ENCODE measurements at regions of chr14 and their contacts with region 1.

Region 1: GRCh38 chr14:54566410-54567223 is at the start of gene SAMD4A:
- DNase-seq: peak; percentile 68 to 88
- ATAC-seq: peak; percentile 60 to 71
- H3K4me3 ChIP-seq: peak within 1 kb of the TSS; percentile 75
- H3K27ac ChIP-seq: peak within 1 kb of the TSS; percentile 88 to 98
- H3K4me1 ChIP-seq: peaks cover 35% of the 10 kb centered on the region
- CTCF ChIP-seq: peak; percentile 33
- EP300 ChIP-seq: no peak
- POLR2A ChIP-seq: peak; percentile 21; the same call in 1 of the 2 replicates
- RAD21 ChIP-seq: peak; percentile 52 to 60
- polyA plus RNA-seq, gene SAMD4A: 3.9 and 5.3 TPM in 2 replicates

Region 2: GRCh38 chr14:54440873-54441868 is 125.4 kb before region 1 on chr14 and contains the start of gene CNIH1:
- CTCF ChIA-PET with region 1: no interaction called
- POLR2A ChIA-PET with region 1: no interaction called
- DNase-seq: peak; percentile 88 to 94
- ATAC-seq: peak; percentile 98 to 99
- H3K4me3 ChIP-seq: peak within 1 kb of the TSS; percentile 78
- H3K27ac ChIP-seq: peak within 1 kb of the TSS; percentile 94 to 98
- H3K4me1 ChIP-seq: peaks cover 36% of the 10 kb centered on the region
- CTCF ChIP-seq: peak; percentile 84
- EP300 ChIP-seq: no peak
- POLR2A ChIP-seq: peak; percentile 92
- RAD21 ChIP-seq: peak in 1 of 2 experiments; percentile 18; a peak in 1 of 5 replicates
- polyA plus RNA-seq, gene CNIH1: 411 and 487 TPM in 2 replicates

Region 3: GRCh38 chr14:54498095-54498531 is 68.5 kb before region 1 on chr14:
- CTCF ChIA-PET with region 1: no interaction called
- POLR2A ChIA-PET with region 1: no interaction called
- DNase-seq: no peak
- ATAC-seq: no peak
- H3K4me3 ChIP-seq: no peak overlapping the region
- H3K27ac ChIP-seq: no peak overlapping the region
- H3K4me1 ChIP-seq: peaks cover 4% of the 10 kb centered on the region; the same call in 1 of the 3 replicates
- CTCF ChIP-seq: no peak
- EP300 ChIP-seq: 0 out of 5 replicates have a peak, but pooled peaks of 1 of the 2 experiments have one; percentile 8
- POLR2A ChIP-seq: no peak
- RAD21 ChIP-seq: no peak

Region 4: DNA sequence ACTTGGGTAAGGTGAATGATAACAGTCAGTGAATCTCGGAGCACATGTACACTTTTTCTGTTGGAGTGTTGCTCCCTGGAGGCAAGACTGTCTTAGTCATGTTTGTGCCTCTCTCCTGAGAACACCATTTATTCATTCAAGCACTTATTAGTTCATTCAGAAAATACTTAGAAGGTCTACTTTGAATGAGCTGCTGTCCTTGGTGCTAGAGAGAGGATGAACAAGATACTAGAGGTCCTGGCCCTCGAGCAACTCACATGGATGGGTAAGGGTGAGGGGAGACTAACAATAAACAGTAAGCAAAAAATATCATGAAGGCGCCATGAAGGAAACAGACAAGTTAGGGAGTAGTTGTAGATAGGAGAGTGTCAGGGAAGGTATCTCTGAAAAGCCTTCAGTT is 16.8 kb before region 1 on chr14:
- CTCF ChIA-PET with region 1: interaction called, 25 read pairs
- POLR2A ChIA-PET with region 1: no interaction called
- DNase-seq: no peak
- ATAC-seq: 0 out of 6 replicates have a peak, but pooled peaks of 1 of the 2 experiments have one; percentile 34
- H3K4me3 ChIP-seq: no peak overlapping the region
- H3K27ac ChIP-seq: no peak overlapping the region
- H3K4me1 ChIP-seq: no peaks in the 10 kb centered on the region
- CTCF ChIP-seq: no peak
- EP300 ChIP-seq: no peak
- POLR2A ChIP-seq: no peak
- RAD21 ChIP-seq: no peak

Region 5: DNA sequence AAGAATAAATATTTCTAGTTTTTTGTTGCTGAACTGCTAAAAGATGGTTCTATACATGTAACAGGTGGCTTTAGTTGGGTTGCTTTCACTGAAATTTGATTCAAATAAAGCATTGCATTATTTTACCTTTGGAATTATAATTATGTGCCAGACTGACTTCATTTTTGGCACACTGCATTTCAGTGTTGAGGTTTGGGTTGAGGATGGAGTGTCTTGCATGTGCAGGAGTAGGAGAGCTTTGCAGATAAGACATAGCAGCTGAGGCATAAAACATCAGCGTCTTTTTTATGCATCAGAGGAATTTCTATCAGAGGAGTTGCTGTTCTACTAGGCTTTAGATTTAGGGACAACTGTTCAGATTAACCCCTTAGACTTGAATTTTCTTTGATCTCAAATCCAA is 17.5 kb after region 1 on chr14:
- CTCF ChIA-PET with region 1: interaction called, 11 read pairs
- POLR2A ChIA-PET with region 1: no interaction called
- DNase-seq: no peak
- ATAC-seq: no peak
- H3K4me3 ChIP-seq: no peak overlapping the region
- H3K27ac ChIP-seq: no peak overlapping the region
- H3K4me1 ChIP-seq: peaks cover 9% of the 10 kb centered on the region
- CTCF ChIP-seq: no peak
- EP300 ChIP-seq: no peak
- POLR2A ChIP-seq: no peak
- RAD21 ChIP-seq: no peak

Region 6: DNA sequence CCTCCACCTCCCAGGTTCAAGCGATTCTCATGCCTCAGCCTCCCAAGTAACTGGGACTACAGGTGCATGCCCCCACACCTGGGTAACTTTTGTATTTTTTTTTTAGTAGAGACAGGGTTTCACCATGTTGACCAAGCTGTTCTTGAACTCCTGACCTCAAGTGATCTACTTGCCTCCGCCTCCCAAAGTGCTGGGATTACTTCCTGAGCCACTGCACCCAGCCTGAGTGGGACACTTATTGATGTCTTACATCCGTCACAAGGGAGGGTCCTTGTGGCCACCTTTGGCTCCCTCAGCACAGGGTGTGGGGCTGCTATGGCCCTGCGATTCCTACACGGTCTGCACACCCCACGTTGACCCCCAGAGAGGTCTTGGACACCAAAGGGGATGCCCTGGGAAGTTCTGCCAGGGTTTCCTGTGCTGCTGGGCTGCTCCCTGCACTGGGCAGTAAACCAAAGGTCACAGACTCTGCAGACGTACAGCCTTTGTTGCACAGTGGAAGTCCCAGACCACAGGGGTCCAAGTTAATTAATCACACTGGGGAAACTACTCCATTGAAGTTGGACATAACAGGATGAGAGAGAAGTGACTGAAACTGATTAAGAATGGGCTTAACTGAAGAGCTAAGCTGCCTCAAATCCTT is 96.0 kb after region 1 on chr14:
- CTCF ChIA-PET with region 1: interaction called, 10 read pairs
- POLR2A ChIA-PET with region 1: no interaction called
- DNase-seq: no peak
- ATAC-seq: no peak
- H3K4me3 ChIP-seq: no peak overlapping the region
- H3K27ac ChIP-seq: no peak overlapping the region
- H3K4me1 ChIP-seq: peaks cover 23% of the 10 kb centered on the region
- CTCF ChIP-seq: no peak
- EP300 ChIP-seq: no peak
- POLR2A ChIP-seq: no peak
- RAD21 ChIP-seq: no peak

Region 7: DNA sequence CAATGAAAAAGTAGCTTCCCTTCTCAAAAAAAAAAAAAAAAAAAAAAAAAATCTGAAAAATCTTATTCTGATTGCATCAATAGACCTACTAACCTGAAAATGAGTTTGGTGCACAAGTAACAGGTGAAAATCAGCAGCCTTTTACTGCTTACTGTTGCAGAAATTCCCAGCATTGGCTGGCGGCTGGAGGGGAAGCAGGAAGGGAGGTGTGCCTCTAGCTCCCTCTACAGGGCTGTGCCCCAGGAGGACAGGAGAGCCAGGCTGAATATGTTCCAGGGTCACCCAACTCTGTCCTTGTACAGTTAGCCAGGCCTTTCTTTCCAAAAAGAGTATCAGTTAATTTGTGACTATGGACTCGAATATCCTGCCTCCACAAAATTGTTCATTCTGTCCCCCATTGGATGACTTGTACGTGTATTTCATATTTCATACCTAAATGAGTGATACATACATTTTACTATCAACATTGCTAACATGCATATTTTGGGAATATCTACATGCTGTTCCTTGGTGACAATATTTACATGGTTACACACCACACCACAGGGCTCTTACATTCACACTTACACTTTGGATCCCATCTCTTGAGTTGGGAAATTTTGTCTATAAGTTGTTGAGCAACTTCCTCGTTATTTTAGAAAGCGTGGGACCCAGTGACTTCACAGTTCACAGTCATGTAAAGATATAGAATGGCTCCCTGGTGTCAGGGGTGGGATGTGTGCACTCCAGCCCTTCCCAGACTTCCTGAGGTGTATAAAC is 125.1 kb after region 1 on chr14:
- CTCF ChIA-PET with region 1: interaction called, 150 read pairs
- POLR2A ChIA-PET with region 1: interaction called, 9 read pairs
- DNase-seq: peak; percentile 59 to 73
- ATAC-seq: peak; percentile 97 to 98
- H3K4me3 ChIP-seq: no peak overlapping the region
- H3K27ac ChIP-seq: no peak overlapping the region
- H3K4me1 ChIP-seq: peaks cover 5% of the 10 kb centered on the region
- CTCF ChIP-seq: peak; percentile 85
- EP300 ChIP-seq: no peak
- POLR2A ChIP-seq: no peak
- RAD21 ChIP-seq: peak; percentile 92 to 95

Region 8: GRCh38 chr14:54782751-54783679 is 216.4 kb after region 1 on chr14:
- CTCF ChIA-PET with region 1: interaction called, 272 read pairs
- POLR2A ChIA-PET with region 1: no interaction called
- DNase-seq: peak in 1 of 2 experiments; percentile 34
- ATAC-seq: peak; percentile 64 to 88; a peak in 5 of 6 replicates
- H3K4me3 ChIP-seq: no peak overlapping the region
- H3K27ac ChIP-seq: no peak overlapping the region
- H3K4me1 ChIP-seq: no peaks in the 10 kb centered on the region
- CTCF ChIP-seq: no peak
- EP300 ChIP-seq: no peak
- POLR2A ChIP-seq: no peak
- RAD21 ChIP-seq: no peak